T-cell (primary cell): ENCODE measurements at regions of chr10 and their contacts with region 1.

Region 1: DNA sequence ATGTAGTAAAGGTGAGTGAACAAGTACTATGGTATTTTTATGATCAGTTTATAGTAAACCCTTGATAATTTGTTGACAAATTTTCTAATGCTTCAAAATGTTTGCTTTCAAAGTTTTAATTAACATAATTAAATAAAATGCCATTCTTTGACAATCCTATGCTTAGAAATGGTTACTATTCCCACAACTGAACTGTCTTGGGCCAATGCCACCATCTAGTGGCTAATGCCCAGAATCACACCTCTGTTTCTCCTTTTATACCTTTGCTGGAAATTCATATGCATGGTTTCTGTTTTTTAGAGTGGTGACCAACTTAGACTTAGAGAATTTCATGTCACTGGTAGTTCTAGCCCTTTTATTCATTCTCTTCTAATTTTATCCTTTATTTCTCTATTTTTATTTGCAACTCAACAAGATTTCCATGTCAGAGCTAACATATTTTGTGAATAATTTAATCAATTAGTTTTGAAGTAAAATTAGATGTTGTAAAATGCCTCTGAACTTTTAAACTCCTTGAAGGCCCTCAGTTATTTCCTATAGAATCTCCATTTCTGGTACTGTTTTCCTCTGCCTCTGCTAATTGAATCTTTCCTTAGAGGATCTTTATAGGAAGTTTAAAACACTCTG is 31.1 kb downstream of the PCGF5 start:
- DNase-seq: peak in 34 of 35 experiments; percentile 18 to 82 (median 48)
- ATAC-seq: peak; percentile 63 to 77 (median 72)
- H3K4me3 ChIP-seq: no peak overlapping the region
- H3K4me3 Mint-ChIP-seq: no peak overlapping the region
- H3K27ac ChIP-seq: no peak overlapping the region
- H3K27ac Mint-ChIP-seq: no peak overlapping the region
- H3K4me1 ChIP-seq: peaks cover 3 to 8% of the 10 kb centered on the region in 2 experiments
- H3K4me1 Mint-ChIP-seq: peaks cover 0 to 6% (median 3%) of the 10 kb centered on the region in 3 donors
- H3K27me3 ChIP-seq: no peaks in the 10 kb centered on the region
- H3K27me3 Mint-ChIP-seq: no peaks in the 10 kb centered on the region

Region 2: GRCh38 chr10:90912174-90912573 is 339.4 kb before region 1 on chr10:
- CTCF ChIA-PET with region 1: interaction called, 21 to 50 read pairs
- POLR2A ChIA-PET with region 1: interaction called in 1 of 2 experiments, 3 read pairs
- DNase-seq: no peak
- ATAC-seq: no peak
- H3K4me3 ChIP-seq: no peak overlapping the region
- H3K4me3 Mint-ChIP-seq: no peak overlapping the region
- H3K27ac ChIP-seq: no peak overlapping the region
- H3K27ac Mint-ChIP-seq: no peak overlapping the region
- H3K4me1 ChIP-seq: peaks cover 3% of the 10 kb centered on the region in 2 experiments
- H3K4me1 Mint-ChIP-seq: peaks cover 3 to 7% (median 4%) of the 10 kb centered on the region in 3 donors
- H3K27me3 ChIP-seq: peaks cover 0 to 4% of the 10 kb centered on the region in 2 experiments
- H3K27me3 Mint-ChIP-seq: peaks cover 6 to 7% of the 10 kb centered on the region in 2 donors

Region 3: GRCh38 chr10:91034494-91035159 is 216.9 kb before region 1 on chr10:
- CTCF ChIA-PET with region 1: interaction called, 3 to 11 read pairs
- POLR2A ChIA-PET with region 1: no interaction called
- DNase-seq: no peak
- ATAC-seq: no peak
- H3K4me3 ChIP-seq: no peak overlapping the region
- H3K4me3 Mint-ChIP-seq: peak overlapping the region; percentile 1 to 34 (median 17)
- H3K27ac ChIP-seq: peak overlapping the region; percentile 65
- H3K27ac Mint-ChIP-seq: peak overlapping the region; percentile 95 to 96
- H3K4me1 ChIP-seq: peaks cover 15 to 17% of the 10 kb centered on the region in 2 experiments
- H3K4me1 Mint-ChIP-seq: peaks cover 17 to 24% (median 24%) of the 10 kb centered on the region in 3 donors
- H3K27me3 ChIP-seq: no peaks in the 10 kb centered on the region
- H3K27me3 Mint-ChIP-seq: no peaks in the 10 kb centered on the region

Region 4: GRCh38 chr10:91088300-91089140 is 163.0 kb before region 1 on chr10:
- CTCF ChIA-PET with region 1: interaction called, 45 to 81 read pairs
- POLR2A ChIA-PET with region 1: interaction called in 1 of 2 experiments, 4 read pairs
- DNase-seq: peak in 2 of 35 experiments; percentile 2 to 45
- ATAC-seq: peak; percentile 34 to 74 (median 63)
- H3K4me3 ChIP-seq: no peak overlapping the region
- H3K4me3 Mint-ChIP-seq: no peak overlapping the region
- H3K27ac ChIP-seq: no peak overlapping the region
- H3K27ac Mint-ChIP-seq: no peak overlapping the region
- H3K4me1 ChIP-seq: no peaks in the 10 kb centered on the region
- H3K4me1 Mint-ChIP-seq: peaks cover 0 to 2% (median 0%) of the 10 kb centered on the region in 3 donors
- H3K27me3 ChIP-seq: no peaks in the 10 kb centered on the region
- H3K27me3 Mint-ChIP-seq: no peaks in the 10 kb centered on the region

Region 5: DNA sequence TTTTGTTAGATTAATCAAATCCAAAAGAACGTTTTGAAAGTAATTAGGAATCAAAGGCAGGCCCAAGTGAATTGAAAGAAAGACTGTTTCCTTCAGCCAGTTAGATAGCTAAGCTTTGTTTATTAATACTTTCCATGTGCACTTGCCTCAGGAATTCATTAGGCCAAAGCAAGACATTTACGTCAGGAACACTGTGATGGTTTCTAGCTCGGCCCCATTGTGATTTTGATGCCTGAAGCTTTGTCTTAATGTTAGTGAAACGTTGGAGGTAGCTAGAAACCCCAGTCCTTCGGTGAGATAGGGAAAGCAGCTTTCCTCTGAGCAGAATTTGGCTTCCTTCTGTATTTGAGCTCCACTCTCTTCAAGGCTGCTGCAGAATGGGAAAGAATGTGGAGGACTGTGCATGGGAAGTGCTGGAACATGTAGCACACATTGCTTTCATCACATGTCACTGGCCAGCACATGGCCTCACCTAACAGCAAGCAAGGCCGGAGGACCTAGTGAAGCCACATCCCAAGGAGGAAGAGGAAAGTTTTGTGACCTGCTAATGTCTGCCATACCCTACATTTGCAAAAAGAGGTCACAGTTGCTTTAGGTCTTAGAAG is 33.0 kb after region 1 on chr10:
- CTCF ChIA-PET with region 1: no interaction called
- POLR2A ChIA-PET with region 1: no interaction called
- DNase-seq: no peak
- ATAC-seq: no peak
- H3K4me3 ChIP-seq: no peak overlapping the region
- H3K4me3 Mint-ChIP-seq: no peak overlapping the region
- H3K27ac ChIP-seq: no peak overlapping the region
- H3K27ac Mint-ChIP-seq: no peak overlapping the region
- H3K4me1 ChIP-seq: no peaks in the 10 kb centered on the region
- H3K4me1 Mint-ChIP-seq: no peaks in the 10 kb centered on the region
- H3K27me3 ChIP-seq: no peaks in the 10 kb centered on the region
- H3K27me3 Mint-ChIP-seq: no peaks in the 10 kb centered on the region

Region 6: GRCh38 chr10:91311601-91312381 is 60.2 kb after region 1 on chr10:
- CTCF ChIA-PET with region 1: no interaction called
- POLR2A ChIA-PET with region 1: no interaction called
- DNase-seq: no peak
- ATAC-seq: no peak
- H3K4me3 ChIP-seq: no peak overlapping the region
- H3K4me3 Mint-ChIP-seq: no peak overlapping the region
- H3K27ac ChIP-seq: no peak overlapping the region
- H3K27ac Mint-ChIP-seq: no peak overlapping the region
- H3K4me1 ChIP-seq: peaks cover 0 to 2% of the 10 kb centered on the region in 2 experiments
- H3K4me1 Mint-ChIP-seq: peaks cover 5 to 8% (median 7%) of the 10 kb centered on the region in 3 donors
- H3K27me3 ChIP-seq: peaks cover 0 to 6% of the 10 kb centered on the region in 2 experiments
- H3K27me3 Mint-ChIP-seq: peaks cover 10 to 13% of the 10 kb centered on the region in 2 donors